ENCODE measurements at regions of chr1 and their contacts with region 1.

Region 1: GRCh38 chr1:194295685-194296084 is 1109.3 kb upstream of the B3GALT2 start:
- DNase-seq: no peak
- H3K4me3 ChIP-seq: no peak overlapping the region
- H3K27ac ChIP-seq: no peak overlapping the region
- H3K4me1 ChIP-seq: no peaks in the 10 kb centered on the region
- H3K27me3 ChIP-seq: no peaks in the 10 kb centered on the region
- CTCF ChIP-seq: peak; percentile 68

Region 2: GRCh38 chr1:193183019-193183627 is 1112.6 kb before region 1 on chr1:
- intact Hi-C with region 1: loop called (anchors 10 kb)
- DNase-seq: no peak
- H3K4me3 ChIP-seq: peak overlapping the region; percentile 65
- H3K27ac ChIP-seq: peak overlapping the region; percentile 84
- H3K4me1 ChIP-seq: peaks cover 90% of the 10 kb centered on the region
- H3K27me3 ChIP-seq: no peaks in the 10 kb centered on the region
- CTCF ChIP-seq: peak; percentile 83

Region 3: DNA sequence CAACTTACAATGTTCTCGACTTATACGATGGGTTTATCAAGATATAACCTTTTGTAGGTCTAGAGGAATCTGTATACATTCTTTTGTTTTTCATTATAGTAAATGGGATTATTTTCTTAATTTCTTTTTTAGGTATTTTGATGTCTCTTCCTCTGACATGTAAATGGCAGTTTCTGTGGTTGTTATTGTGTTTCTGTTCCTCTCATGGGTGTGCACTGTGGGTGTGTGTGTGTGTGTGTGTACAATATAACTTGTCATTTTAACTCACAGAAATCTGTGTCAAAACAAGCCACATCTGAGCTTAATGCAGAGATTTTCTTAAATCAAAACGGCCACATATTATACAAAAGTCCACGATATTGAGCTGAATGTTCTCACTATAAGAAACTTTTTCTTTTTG is 191.5 kb after region 1 on chr1:
- intact Hi-C with region 1: no loop called
- DNase-seq: no peak
- H3K4me3 ChIP-seq: no peak overlapping the region
- H3K27ac ChIP-seq: no peak overlapping the region
- H3K4me1 ChIP-seq: no peaks in the 10 kb centered on the region
- H3K27me3 ChIP-seq: no peaks in the 10 kb centered on the region
- CTCF ChIP-seq: no peak

Measured in left ventricle myocardium inferior (tissue), 1 donor.